Motor neuron (in vitro differentiated cells): ENCODE measurements at regions of chr11 and their contacts with region 1.

Region 1: GRCh38 chr11:128949791-128950454 is 7.3 kb upstream of the TP53AIP1 start:
- ATAC-seq: peak in 1 of 8 experiments; percentile 26
- H3K4me3 ChIP-seq: no peak overlapping the region
- H3K27ac ChIP-seq: no peak overlapping the region
- H3K4me1 ChIP-seq: no peaks in the 10 kb centered on the region

Region 2: DNA sequence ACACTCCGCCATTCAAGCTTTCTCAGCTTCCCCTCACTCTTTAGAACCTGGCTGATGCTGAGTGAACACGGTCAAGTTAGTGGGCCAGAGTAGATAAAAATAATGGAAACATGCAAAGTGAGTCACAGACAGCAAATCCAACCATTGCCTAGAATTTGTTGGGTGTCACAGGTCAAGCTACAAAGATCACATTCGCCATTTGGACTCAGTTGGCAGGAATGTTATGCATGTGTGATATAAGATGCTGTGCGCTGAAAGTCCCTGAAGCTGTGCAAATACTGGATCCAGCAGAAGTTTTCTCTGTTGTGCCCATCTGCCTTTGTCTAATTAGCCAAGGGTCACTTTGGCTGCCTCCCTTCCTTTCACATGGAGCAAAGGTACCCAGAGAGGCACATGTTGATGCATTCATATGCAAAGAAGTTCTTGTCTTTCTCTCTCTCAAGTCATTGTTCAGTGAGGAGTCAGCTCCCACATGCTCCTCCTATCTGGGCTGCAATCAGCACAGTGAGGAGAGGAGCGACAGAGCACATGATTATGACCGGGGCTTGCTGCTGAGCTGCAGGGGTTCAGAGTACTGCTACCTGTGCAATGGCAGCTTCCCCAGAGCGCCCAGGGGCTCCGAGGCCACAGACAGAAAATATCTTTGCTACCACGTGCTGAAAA is 216.4 kb before region 1 on chr11:
- in situ Hi-C with region 1: no loop called
- ATAC-seq: peak in 7 of 8 experiments; percentile 59 to 98 (median 97)
- H3K4me3 ChIP-seq: no peak overlapping the region
- H3K27ac ChIP-seq: no peak overlapping the region
- H3K4me1 ChIP-seq: peaks cover 15 to 21% of the 10 kb centered on the region in 2 donors

Region 3: DNA sequence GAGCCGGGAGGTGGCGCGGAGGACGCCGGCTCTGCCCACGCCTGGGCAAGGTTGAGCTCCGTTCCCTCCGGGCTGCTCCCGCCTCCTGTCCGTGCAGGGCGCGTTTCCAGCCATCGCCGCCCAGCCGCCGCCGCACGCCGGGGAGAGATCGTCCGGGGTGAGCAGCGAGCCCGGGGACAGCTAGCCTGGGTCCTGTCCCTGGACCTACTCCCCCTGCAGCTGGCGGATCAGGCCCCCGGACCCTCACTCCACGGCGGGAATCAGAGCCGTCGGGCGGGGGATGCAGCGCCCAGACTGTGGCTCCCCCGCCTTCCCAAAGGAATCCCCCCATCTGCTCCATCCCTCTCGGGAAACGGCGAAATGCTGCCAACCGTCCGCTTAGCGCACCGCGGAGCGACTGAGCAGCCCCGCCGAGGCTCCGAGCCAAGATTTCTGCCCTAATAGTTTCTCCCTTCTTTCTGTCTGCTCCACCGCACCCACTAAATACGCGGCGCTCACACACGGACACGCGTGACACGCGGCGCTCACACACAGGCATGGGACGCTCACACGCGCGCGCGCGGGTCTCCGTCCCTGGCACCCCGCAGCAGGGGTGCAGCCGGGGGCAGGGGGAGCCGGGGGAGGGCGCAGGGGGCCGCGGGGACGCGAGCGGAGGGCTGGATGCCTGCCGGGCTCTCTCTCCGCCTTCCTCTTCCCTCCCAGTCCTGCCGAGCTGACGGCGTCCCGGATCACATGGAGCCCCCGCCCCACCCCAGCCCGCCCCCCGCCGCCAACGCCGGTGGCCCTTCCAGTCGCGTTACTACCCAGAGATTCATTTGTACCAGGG is 59.2 kb before region 1 on chr11 and contains the start of gene KCNJ5:
- in situ Hi-C with region 1: loop called in 7 of 9 experiments (anchors 5 to 10 kb)
- ATAC-seq: peak; percentile 73 to 83 (median 78)
- H3K4me3 ChIP-seq: peak within 1 kb of the TSS; percentile 32 to 49 (median 47)
- H3K27ac ChIP-seq: peak within 1 kb of the TSS; percentile 6 to 62
- H3K4me1 ChIP-seq: peaks cover 22 to 41% of the 10 kb centered on the region in 2 donors
- total RNA-seq, gene KCNJ5: 0.15 to 3.6 (median 1.2) TPM in 7 of 8 experiments, not detected in the other